PC-9 (cell line): ENCODE measurements at regions of chr13 and their contacts with region 1.

Region 1: DNA sequence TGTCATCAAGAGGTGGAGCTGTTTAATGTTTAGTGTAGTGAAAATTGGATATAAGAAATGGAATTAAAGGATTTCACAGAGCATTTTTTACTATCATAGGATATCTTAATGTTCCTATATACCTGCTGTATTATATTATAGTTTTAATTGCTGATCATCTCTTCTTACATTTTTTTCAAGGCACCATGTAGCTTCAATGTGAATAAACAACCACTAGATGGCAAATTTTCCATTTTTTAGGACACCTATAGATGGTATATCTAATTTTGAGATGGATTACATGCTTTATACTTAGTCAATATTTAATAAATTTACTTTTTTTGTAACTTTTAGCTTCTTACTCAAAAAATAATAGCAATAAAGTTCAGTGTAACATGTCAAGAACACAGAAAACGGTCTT is 9.0 kb upstream of the ATXN8OS start:
- DNase-seq: no peak
- H3K4me3 ChIP-seq: no peak overlapping the region
- H3K27ac ChIP-seq: no peak overlapping the region
- H3K4me1 ChIP-seq: no peaks in the 10 kb centered on the region
- H3K27me3 ChIP-seq: no peaks in the 10 kb centered on the region
- CTCF ChIP-seq: peak; percentile 64

Region 2: DNA sequence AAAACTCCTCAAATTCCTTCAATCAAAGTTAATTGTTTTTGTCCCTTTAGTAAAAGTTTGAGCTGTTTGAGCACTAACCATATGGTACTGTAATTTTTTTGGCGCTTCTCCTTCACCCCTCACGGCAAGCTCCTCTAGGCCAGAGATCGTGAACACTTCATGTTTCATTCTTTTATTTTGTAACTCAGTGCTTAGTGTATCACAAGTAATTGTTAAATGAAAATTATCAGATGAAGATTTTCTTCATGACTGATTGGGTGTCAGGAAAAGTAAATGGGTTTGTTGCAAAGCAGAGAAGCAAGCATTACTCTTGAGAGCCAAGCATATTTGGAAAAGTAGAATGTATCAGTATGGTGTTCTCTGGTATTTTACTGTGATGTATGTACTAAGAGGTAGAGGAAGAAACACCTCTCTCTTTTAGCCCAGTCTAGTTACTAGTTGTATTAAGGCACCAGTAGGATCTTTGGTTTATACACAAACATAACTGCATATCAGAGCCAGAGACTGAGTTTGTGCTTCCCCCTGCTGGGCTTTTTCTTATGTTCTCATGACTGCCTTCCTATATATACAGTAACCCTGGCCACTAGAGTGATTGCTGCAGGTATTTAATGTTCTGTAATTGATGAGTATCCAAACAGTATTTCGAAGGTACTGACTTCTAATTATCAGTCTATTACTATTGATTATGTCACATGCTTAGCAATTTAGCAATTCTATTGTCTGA is 211.9 kb after region 1 on chr13:
- CTCF ChIA-PET with region 1: no interaction called
- POLR2A ChIA-PET with region 1: no interaction called
- intact Hi-C with region 1: loop called (anchors 10 kb)
- DNase-seq: peak in 1 of 2 experiments; percentile 13
- H3K4me3 ChIP-seq: no peak overlapping the region
- H3K27ac ChIP-seq: no peak overlapping the region
- H3K4me1 ChIP-seq: no peaks in the 10 kb centered on the region
- H3K27me3 ChIP-seq: no peaks in the 10 kb centered on the region
- CTCF ChIP-seq: peak; percentile 49

Region 3: DNA sequence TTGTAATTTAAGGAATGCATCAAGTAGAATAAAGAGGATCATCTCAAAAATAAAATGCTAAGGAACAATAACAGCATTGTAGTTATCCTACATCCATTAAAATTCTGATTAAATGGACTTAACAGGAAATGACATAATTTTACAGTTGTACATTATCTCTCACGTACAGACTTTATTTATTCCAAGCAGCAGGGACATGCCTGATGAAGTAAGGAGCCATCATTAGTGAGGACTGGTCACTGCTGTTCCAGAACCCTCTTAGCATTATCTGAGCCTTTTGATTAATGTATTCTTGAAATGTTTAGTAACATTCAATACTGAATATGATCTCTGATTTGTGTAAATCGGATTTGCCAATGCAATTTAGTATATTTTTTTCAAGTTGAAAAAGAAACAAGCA is 1252.2 kb after region 1 on chr13:
- CTCF ChIA-PET with region 1: no interaction called
- POLR2A ChIA-PET with region 1: no interaction called
- intact Hi-C with region 1: no loop called
- DNase-seq: no peak
- H3K4me3 ChIP-seq: no peak overlapping the region
- H3K27ac ChIP-seq: no peak overlapping the region
- H3K4me1 ChIP-seq: no peaks in the 10 kb centered on the region
- H3K27me3 ChIP-seq: no peaks in the 10 kb centered on the region
- CTCF ChIP-seq: no peak